Cardiac septum (tissue), 1 donor: ENCODE measurements at regions of chr7 and their contacts with region 1.

Region 1: GRCh38 chr7:92245487-92246362 is at the starts of genes ANKIB1 and KRIT1:
- DNase-seq: peak; percentile 95
- total RNA-seq, gene ANKIB1: 59.4 TPM
- total RNA-seq, gene KRIT1: 29.3 TPM

Region 2: DNA sequence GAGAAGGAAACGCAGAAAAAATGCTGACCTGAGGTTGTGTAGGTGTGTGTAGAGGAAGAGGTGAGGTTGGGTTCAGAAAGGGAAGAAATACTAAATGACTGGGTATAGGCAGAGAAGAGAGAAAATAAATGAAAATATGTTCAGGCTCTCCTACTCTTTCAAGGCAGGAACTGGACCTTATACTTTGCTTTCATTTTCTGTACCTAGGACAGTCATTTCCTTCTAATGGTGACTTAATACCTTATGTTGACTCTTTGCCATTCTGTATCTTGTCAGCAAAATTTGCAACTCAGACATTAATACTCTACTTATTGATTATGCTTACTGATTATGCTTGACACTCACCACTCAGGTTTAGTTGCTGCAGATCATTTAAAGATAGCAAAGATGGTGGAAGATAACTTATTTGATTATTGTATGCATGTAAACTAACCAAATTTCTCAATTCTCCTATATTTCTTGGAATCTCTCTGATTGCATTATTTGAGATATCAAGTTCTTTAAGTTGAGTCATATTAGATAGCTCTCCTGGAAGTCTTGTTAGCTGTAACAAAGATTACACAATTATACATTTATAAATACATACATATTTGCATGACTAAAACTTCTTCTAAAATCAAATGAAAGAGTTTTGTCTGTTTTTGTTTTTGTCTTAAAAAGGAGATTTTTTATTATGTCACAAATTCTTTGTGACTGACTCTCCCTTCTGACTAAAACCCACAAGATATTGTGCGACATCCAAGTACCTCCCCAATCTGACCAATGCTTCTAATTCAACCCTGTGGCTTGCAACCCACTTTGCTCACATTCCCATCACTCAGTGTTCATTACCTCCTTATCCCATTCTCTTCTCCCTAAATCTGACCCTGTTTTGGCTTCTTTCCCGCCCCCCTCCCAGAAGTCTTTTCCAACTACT is 86.8 kb before region 1 on chr7:
- intact Hi-C with region 1: no loop called
- DNase-seq: no peak

Region 3: GRCh38 chr7:92292981-92293380 is 47.3 kb after region 1 on chr7:
- intact Hi-C with region 1: loop called (anchors 10 kb)
- DNase-seq: no peak

Region 4: DNA sequence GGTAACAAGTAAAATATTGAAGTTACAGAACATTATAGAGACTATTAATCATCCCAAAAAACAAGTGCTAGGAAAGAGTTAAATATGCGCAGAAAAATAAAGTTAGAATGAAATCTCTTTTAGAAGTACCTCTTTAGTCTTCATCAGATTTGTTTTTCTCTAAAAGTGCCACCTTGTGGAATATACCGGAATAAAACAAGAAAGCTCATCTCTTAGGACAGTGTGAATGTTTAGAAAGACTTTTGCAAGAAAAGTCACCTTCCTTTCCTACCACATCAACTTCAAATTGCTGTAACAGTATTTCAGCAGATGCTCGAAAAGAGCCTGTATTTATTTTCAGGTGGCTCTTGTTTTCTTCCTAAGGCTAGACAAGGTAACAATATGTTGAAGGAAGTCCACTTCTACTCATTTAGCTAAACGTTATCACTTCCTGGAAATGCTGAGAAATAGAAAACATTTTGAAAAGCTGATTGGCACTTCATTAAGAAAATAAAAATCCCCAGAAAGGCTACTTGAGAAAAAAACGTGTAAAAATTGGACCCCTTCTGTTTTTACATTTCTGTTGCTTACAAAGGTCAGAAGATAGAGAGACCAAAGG is 364.3 kb after region 1 on chr7:
- intact Hi-C with region 1: no loop called
- DNase-seq: no peak